ENCODE measurements at regions of chr5 and their contacts with region 1.

Region 1: GRCh38 chr5:66757188-66757833 is 161.1 kb downstream of the MAST4 start:
- DNase-seq: peak; percentile 44
- ATAC-seq: no peak
- H3K4me3 ChIP-seq: no peak overlapping the region
- H3K27ac ChIP-seq: no peak overlapping the region
- H3K4me1 ChIP-seq: no peaks in the 10 kb centered on the region
- H3K27me3 ChIP-seq: no peaks in the 10 kb centered on the region
- CTCF ChIP-seq: peak; percentile 38
- POLR2A ChIP-seq: no peak
- RAD21 ChIP-seq: peak; percentile 40

Region 2: GRCh38 chr5:66179297-66180051 is 577.8 kb before region 1 on chr5:
- CTCF ChIA-PET with region 1: no interaction called
- POLR2A ChIA-PET with region 1: no interaction called
- dilution Hi-C with region 1: no loop called
- in situ Hi-C with region 1: no loop called
- intact Hi-C with region 1: loop called (anchors 5 kb)
- DNase-seq: no peak
- ATAC-seq: no peak
- H3K4me3 ChIP-seq: no peak overlapping the region
- H3K27ac ChIP-seq: no peak overlapping the region
- H3K4me1 ChIP-seq: no peaks in the 10 kb centered on the region
- H3K27me3 ChIP-seq: no peaks in the 10 kb centered on the region
- CTCF ChIP-seq: no peak
- POLR2A ChIP-seq: no peak
- RAD21 ChIP-seq: no peak

Region 3: GRCh38 chr5:66329078-66329477 is 428.2 kb before region 1 on chr5:
- CTCF ChIA-PET with region 1: no interaction called
- POLR2A ChIA-PET with region 1: no interaction called
- dilution Hi-C with region 1: no loop called
- in situ Hi-C with region 1: no loop called
- intact Hi-C with region 1: no loop called
- DNase-seq: no peak
- ATAC-seq: no peak
- H3K4me3 ChIP-seq: no peak overlapping the region
- H3K27ac ChIP-seq: no peak overlapping the region
- H3K4me1 ChIP-seq: no peaks in the 10 kb centered on the region
- H3K27me3 ChIP-seq: no peaks in the 10 kb centered on the region; the same call in 1 of the 2 replicates
- CTCF ChIP-seq: no peak
- POLR2A ChIP-seq: no peak
- RAD21 ChIP-seq: no peak

Region 4: GRCh38 chr5:66981266-66982055 is 224.2 kb after region 1 on chr5:
- CTCF ChIA-PET with region 1: no interaction called
- POLR2A ChIA-PET with region 1: no interaction called
- dilution Hi-C with region 1: no loop called
- in situ Hi-C with region 1: no loop called
- intact Hi-C with region 1: no loop called
- DNase-seq: no peak
- ATAC-seq: no peak
- H3K4me3 ChIP-seq: no peak overlapping the region
- H3K27ac ChIP-seq: no peak overlapping the region
- H3K4me1 ChIP-seq: no peaks in the 10 kb centered on the region; the same call in 1 of the 2 replicates
- H3K27me3 ChIP-seq: no peaks in the 10 kb centered on the region
- CTCF ChIP-seq: no peak
- POLR2A ChIP-seq: no peak
- RAD21 ChIP-seq: no peak